HEK293T (cell line): ENCODE measurements at regions of chr7 and their contacts with region 1.

Region 1: DNA sequence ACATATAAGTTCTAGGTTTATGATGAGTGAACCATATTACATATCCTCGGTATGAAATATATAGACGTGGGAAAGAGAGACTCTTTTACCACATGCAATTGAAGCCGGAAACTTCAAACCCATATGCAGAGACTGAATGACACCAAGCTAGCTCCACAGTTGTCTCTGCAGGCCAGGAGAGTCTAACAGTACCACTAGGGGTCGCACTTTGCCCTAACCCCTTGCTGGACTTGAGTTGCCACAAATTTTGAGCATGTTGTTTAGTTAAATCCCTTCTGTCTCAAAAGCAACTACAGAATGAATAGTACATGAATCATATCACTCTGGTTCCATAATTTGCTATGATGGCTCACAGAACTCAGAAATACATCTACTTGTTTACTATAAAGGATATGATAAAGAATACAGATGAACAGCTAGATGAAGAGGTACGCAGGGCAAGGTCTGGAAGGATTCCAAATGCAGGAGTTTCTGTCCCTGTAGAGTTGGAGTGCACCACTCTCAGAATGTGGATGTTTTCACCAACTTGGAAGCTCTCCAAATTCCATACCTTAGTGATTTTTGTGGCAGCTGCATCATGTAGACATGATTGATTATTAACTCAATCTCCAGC is 112.4 kb upstream of the YAE1 start:
- DNase-seq: peak; percentile 63

Region 2: DNA sequence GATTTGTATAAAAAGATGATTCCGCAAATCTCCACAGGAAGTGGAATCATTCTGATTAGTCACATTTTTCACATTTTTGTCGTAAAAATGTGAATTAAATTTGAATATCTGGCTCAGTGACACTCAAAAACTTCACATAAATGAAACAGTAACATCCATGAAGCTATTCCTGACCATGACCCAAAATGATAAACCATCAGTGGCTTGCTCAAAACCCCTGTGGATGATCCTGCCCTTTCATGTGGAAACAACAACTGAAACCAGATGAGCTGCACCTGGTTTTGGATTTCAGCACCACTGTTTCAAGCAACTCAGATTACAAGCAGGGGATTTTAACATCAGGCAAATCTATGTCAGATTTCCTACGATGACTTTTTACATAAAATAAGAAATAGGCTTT is 903.0 kb before region 1 on chr7:
- CTCF ChIA-PET with region 1: interaction called, 12 read pairs
- POLR2A ChIA-PET with region 1: no interaction called
- DNase-seq: no peak

Region 3: DNA sequence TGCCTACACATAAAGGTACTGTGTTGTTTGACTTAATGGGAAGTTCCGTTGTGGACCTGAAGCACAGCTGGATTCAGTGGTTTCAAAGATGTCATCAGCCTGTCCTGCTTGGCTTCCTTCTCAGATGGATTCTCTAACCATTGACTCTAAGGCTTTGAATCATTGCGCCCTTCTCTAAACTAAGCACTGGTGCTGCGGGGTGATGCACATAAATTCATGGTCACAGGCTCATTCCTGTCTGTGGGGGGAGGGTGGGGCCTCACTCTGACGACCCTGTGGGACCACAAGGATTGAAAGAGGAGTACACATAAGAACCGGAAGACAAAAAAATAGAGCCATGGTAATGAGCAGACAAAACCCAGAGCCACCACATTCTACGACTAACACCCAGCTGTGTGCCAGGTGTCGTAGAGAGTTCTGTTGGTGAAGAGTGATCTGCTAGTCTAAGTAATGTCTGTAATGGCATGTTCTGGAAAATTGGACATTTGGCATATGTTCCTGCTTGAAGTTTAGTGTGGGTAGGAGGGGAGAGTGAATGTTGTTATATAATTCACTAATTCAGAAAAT is 15.0 kb after region 1 on chr7:
- CTCF ChIA-PET with region 1: interaction called, 13 read pairs
- POLR2A ChIA-PET with region 1: no interaction called
- DNase-seq: no peak

Region 4: DNA sequence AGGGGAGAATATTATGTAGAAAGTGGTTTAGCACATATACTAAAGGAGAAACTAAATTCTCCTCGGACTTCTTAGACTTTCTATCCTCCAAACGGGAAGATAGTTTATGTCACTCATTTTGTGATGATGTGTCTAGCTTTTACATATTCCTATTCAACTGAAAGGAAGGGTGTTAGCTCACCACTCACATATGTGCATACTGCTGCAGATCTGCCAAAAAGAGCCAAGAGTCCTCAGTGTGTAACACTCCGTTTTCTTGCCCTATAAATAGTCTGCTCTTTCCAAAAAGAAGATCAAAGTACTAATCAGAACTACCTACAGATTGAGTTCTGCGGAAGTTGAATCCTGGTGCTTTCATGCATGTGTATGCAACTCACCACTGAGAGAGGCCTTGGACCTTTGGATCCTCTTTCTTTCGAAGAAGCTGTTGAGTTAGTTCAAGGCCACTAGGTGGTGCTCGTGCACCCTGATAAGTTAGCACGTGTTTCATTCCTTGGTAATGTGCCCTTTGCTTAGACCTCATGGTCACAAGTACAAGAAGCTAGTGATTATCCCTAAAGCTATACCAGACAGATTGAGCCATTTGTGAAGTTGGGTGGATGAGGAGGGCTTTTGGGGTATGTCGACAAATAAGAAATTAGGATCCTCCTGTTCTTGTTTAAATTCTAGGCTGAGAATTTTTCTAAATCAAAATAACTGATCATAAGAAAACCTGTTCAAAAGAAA is 126.5 kb after region 1 on chr7:
- CTCF ChIA-PET with region 1: no interaction called
- POLR2A ChIA-PET with region 1: no interaction called
- DNase-seq: peak; percentile 77